Heart left ventricle (tissue), 16 donors: ENCODE measurements at regions of chr6 and their contacts with region 1.

Region 1: GRCh38 chr6:19851241-19852089 is 14.3 kb downstream of the ID4 start:
- DNase-seq: peak in 1 of 5 donors; percentile 23
- ATAC-seq: peak; percentile 61 to 94 (median 88)
- H3K4me3 ChIP-seq: peak overlapping the region in 2 of 12 donors; percentile 8 to 11
- H3K27ac ChIP-seq: peak overlapping the region in 2 of 12 donors; percentile 11 to 30
- H3K4me1 ChIP-seq: peaks cover 0 to 9% (median 2%) of the 10 kb centered on the region in 12 donors
- H3K27me3 ChIP-seq: no peaks in the 10 kb centered on the region
- CTCF ChIP-seq: peak; percentile 61 to 93 (median 82)
- POLR2A ChIP-seq: no peak

Region 2: DNA sequence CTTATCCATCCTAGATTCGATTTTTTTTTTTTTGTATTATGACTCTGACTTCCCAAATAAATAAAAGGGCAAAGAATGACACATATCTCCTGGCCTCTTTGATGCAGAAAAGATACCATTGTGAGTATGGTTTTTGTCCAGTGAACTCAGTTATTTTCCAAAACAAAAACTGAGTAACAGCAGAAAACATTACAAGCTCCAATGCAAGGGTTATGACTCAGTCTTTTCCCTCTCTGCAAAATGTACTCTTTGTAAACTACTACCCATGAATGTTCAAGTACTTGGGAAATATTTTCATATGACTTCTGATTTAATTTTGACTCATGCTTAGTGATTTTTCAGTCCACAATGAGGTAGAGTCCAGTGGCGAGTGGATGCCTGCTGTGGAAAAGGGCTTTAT is 1109.1 kb before region 1 on chr6:
- intact Hi-C with region 1: loop called in 3 of 10 experiments (anchors 5 to 10 kb)
- DNase-seq: no peak
- ATAC-seq: no peak
- H3K4me3 ChIP-seq: no peak overlapping the region
- H3K27ac ChIP-seq: no peak overlapping the region
- H3K4me1 ChIP-seq: no peaks in the 10 kb centered on the region
- H3K27me3 ChIP-seq: peaks cover 0 to 4% (median 0%) of the 10 kb centered on the region in 9 donors
- CTCF ChIP-seq: no peak
- POLR2A ChIP-seq: no peak

Region 3: DNA sequence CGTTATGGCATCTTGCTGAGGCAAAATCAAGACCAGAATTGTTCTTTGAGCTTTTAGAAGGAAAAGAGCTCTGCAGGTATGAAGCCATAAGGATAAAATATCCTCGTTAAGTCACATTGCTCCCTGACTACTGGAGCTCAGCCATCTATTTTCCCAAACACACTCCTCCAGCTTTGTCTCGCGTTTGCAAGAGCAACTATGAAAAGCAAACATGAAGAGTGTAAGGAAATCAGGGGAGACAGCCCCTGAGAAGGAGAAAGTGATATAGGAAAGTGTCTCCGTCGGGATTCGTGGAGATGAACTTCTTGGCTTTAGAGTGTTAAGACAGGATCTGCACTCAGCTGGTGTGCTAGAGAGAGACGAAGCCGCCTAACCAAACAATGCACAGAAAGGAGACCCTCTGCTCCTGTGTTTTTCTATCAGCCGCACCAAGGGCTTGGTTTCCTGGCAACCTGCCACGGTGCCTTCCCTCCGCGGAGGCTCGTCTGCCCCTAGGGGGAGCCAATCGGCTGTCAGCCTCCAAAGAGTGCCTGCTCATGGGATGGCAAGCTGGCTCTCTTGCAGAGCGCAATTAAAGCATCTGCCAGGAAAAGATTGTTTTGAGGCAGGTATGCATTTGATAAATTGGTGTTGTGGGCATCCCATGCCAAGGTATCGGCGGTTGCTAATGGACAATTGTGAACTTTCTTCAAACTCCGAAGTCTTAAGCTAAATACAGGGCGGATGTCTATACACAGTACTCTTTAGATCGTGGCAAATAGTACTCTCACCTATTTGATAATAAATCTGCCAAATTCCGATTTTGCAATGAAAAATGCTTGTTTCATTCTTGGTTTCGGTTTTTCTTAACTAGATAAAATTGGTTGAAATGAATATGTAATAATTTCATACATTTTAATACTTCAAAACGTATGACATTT is 861.1 kb before region 1 on chr6:
- intact Hi-C with region 1: loop called in 1 of 10 experiments (anchors 10 kb)
- DNase-seq: peak; percentile 64 to 80 (median 74)
- ATAC-seq: peak in 3 of 4 donors; percentile 62 to 75 (median 74)
- H3K4me3 ChIP-seq: peak overlapping the region in 3 of 12 donors; percentile 8 to 11 (median 11)
- H3K27ac ChIP-seq: no peak overlapping the region
- H3K4me1 ChIP-seq: peaks cover 0 to 7% (median 0%) of the 10 kb centered on the region in 12 donors
- H3K27me3 ChIP-seq: no peaks in the 10 kb centered on the region
- CTCF ChIP-seq: peak; percentile 42 to 75 (median 58)
- POLR2A ChIP-seq: no peak

Region 4: GRCh38 chr6:19035461-19036195 is 815.8 kb before region 1 on chr6:
- intact Hi-C with region 1: loop called in 1 of 10 experiments (anchors 10 kb)
- DNase-seq: no peak
- ATAC-seq: peak in 1 of 4 donors; percentile 39
- H3K4me3 ChIP-seq: no peak overlapping the region
- H3K27ac ChIP-seq: peak overlapping the region in 3 of 12 donors; percentile 18 to 43 (median 31)
- H3K4me1 ChIP-seq: peaks cover 0 to 42% (median 17%) of the 10 kb centered on the region in 12 donors
- H3K27me3 ChIP-seq: no peaks in the 10 kb centered on the region
- CTCF ChIP-seq: no peak
- POLR2A ChIP-seq: no peak

Region 5: DNA sequence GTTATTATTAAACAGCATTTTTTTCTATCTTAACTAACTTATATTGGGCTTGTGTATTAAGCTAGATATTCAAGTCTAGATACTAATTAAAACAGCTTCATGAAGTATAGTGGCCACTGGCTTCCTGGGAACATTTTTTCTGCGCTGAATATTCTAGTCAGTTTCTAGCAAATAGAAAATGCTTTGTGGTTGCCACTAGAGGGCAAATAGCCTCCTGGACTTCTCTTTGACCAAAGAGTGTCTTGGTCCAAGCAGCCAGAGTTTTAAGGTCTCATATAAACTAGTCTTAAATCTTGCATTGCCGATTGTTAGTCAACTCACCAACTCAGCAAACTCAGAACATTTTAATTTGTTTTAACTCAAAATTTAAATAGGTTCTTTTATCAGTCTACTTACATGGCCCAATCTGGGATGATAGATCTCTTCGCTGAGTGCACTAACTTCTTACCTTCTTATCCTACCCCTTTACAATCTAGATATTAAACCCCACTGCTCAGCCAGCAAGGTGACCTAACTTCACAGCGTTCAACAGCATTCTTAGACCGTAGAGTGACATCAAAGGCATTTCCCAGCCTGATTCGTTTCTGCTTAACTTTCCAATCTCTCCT is 38.8 kb before region 1 on chr6:
- intact Hi-C with region 1: loop called in 2 of 10 experiments (anchors 5 kb)
- DNase-seq: no peak
- ATAC-seq: peak in 1 of 4 donors; percentile 51
- H3K4me3 ChIP-seq: no peak overlapping the region
- H3K27ac ChIP-seq: no peak overlapping the region
- H3K4me1 ChIP-seq: no peaks in the 10 kb centered on the region
- H3K27me3 ChIP-seq: peaks cover 0 to 3% (median 0%) of the 10 kb centered on the region in 9 donors
- CTCF ChIP-seq: peak; percentile 27 to 71 (median 56)
- POLR2A ChIP-seq: no peak